ENCODE measurements at regions of chr5 and their contacts with region 1.

Region 1: DNA sequence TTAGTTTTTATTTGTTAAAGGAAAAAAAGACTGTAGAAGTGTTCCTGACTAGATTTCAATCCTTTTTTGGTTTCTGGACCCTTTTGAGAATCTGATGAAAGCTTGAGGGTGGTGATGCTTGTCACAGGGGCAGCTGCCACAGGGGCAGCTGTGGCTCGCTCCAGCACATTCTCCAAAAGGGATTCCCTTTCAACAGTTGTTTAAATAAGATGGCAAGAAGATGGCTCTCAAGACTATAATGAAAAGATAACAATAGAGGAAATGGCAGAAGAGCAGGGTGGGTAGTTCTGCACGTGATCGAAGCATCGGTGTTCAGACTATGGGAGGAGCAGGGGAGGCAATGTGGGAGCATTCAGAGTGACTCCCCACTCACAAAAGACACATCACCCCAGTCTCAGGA is 46.5 kb upstream of the TNFAIP8 start:
- DNase-seq: no peak
- H3K4me3 Mint-ChIP-seq: peak overlapping the region; percentile 82
- H3K27ac Mint-ChIP-seq: peak overlapping the region; percentile 96
- H3K4me1 Mint-ChIP-seq: peaks cover 92% of the 10 kb centered on the region
- H3K27me3 Mint-ChIP-seq: no peaks in the 10 kb centered on the region

Region 2: DNA sequence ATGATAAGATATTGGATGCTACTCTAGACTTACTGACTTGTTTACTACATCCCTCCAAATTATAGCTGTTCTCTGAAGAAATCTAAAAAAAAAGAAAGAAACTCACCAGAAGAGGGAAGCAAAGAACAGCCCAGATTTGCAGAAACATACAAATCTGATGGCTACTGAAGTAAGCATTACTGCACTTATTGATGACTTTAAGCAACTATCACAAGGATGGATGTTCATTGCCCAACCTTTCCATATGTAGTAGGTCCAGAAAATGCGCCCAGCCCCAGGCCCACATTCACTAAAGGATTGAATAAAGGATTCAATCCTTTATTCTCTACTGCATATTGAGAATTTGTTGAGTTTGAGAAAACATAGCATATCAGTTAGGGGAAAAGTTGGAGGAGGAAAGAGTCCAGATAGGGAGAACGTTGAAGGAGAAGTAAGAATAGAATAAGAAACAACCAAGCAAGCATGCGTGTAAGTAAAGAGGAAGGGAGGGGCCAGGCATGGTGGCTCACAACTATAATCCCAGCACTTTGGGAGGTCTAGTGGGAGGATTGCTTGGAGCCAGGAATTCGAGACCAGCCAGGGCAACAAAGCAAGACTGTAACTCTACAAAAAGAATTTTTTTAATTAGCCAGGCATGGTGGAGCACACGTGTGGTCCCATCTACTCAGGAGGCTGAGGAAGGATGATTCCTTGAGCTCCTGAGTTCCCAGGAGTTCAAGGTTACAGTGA is 287.1 kb before region 1 on chr5:
- intact Hi-C with region 1: loop called (anchors 5 kb)
- DNase-seq: no peak
- H3K4me3 Mint-ChIP-seq: no peak overlapping the region
- H3K27ac Mint-ChIP-seq: no peak overlapping the region
- H3K4me1 Mint-ChIP-seq: peaks cover 4% of the 10 kb centered on the region
- H3K27me3 Mint-ChIP-seq: peaks cover 1% of the 10 kb centered on the region

Region 3: DNA sequence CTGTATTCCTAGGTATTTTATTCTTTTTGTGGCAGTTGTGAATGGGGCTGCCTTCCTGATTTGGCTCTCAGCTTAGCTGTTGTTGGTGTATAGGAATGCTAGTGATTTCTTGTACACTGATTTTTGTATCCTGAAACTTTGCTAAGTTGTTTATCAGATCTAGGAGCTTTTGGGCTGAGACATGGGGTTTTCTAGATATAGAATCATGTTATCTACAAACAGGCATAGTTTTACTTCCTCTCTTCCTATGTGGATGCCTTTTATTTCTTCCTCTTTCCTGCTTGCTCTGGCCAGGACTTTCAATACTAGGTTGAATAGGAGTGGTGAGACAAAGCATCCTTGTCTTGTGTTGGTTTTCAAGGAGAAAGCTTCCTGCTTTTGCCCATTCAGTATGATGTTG is 108.5 kb before region 1 on chr5:
- intact Hi-C with region 1: no loop called
- DNase-seq: no peak
- H3K4me3 Mint-ChIP-seq: no peak overlapping the region
- H3K27ac Mint-ChIP-seq: peak overlapping the region; percentile 35
- H3K4me1 Mint-ChIP-seq: peaks cover 6% of the 10 kb centered on the region
- H3K27me3 Mint-ChIP-seq: no peaks in the 10 kb centered on the region

Region 4: DNA sequence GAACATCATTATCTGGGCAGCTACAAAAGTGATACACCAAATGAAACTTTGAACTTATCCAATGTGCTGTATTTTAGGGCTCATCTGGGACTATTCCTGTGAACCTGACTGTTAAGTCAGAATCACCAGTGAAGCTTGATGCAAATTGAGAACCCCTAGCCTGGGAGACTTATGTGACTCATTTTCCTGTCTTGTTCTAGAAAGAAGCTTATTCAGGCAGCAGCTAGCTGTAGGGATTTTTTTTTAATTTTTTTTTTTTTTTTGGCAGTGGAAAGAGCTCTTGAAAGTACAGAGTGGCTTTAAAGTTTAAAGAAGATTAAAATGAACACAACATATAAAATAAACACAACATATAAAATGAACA is 34.6 kb before region 1 on chr5:
- intact Hi-C with region 1: loop called (anchors 1 kb)
- DNase-seq: no peak
- H3K4me3 Mint-ChIP-seq: peak overlapping the region; percentile 99
- H3K27ac Mint-ChIP-seq: peak overlapping the region; percentile 95
- H3K4me1 Mint-ChIP-seq: peaks cover 98% of the 10 kb centered on the region
- H3K27me3 Mint-ChIP-seq: no peaks in the 10 kb centered on the region

Region 5: GRCh38 chr5:119287547-119288073 is 21.7 kb before region 1 on chr5:
- intact Hi-C with region 1: loop called (anchors 1 kb)
- DNase-seq: no peak
- H3K4me3 Mint-ChIP-seq: peak overlapping the region; percentile 72
- H3K27ac Mint-ChIP-seq: peak overlapping the region; percentile 93
- H3K4me1 Mint-ChIP-seq: peaks cover 99% of the 10 kb centered on the region
- H3K27me3 Mint-ChIP-seq: no peaks in the 10 kb centered on the region

Region 6: DNA sequence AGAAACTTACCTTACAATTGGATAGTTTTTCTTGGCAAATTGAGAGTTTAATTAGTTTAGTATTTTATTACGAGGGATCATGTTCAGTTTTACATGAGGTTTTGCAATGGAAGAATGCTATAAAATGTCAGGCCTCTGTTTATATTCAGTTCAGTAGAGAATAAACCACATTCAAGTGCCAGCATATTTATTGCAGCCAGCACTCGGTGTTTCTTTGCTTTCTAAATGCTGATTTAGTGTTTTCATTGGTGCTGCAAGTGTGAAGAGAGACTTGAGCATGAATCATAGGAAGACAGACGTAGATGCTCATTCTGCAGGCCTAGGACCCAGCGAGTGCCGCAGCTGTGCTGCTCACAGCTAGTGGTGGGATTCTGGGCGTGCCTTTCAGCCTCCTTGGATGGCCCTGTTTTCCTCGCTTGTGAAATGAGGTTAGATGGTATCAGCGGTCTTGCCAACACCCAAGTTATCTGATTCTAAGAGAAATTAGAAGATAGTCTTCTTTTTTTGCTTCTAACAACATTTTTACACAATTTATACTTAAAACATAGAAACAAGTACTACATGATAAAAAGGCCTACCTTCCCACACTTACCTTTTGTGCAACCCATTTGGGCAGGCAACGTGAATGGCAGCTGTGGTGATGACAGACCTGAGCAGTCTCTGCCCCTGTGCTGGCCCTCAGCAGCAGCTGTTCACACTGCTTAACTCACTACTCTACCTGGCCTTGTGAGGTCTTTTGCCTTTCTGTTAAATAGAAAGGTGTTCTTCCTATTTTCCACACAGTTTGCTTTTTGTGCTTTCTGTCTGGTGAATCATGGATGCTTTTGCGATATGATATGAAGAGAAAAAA is 19.7 kb after region 1 on chr5:
- intact Hi-C with region 1: loop called (anchors 1 kb)
- DNase-seq: peak; percentile 52
- H3K4me3 Mint-ChIP-seq: peak overlapping the region; percentile 52
- H3K27ac Mint-ChIP-seq: peak overlapping the region; percentile 95
- H3K4me1 Mint-ChIP-seq: peaks cover 91% of the 10 kb centered on the region
- H3K27me3 Mint-ChIP-seq: no peaks in the 10 kb centered on the region

Region 7: DNA sequence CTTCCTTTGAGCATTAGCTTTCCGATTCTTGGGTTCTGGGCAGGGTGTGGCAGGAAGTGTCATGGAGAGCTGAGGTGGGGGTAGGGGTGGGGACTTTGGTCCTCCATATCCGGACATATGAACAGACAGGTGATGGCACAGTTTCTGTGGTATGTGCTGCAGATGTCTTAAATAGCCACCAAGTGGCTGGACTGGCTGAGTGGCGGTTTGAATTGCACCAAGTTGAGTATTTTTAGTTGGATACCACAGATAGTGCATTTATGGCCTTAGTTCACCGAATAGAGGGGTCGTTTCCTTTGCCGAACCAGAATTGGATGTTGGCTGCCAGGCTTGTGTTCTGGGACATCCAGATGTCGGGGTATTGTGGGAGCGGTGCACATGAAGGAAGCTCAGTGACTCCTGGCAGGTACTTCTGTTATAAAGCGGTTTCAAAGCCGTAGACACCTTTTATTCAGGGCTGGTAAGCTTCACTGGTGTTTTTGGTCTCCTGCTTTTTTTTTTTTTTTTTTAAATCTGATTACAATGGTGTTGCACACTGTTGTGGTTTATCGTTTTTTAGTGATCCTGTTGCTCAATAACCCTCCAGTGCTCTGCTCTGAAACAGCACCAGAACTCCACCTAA is 31.4 kb after region 1 on chr5:
- intact Hi-C with region 1: loop called (anchors 1 kb)
- DNase-seq: peak; percentile 63
- H3K4me3 Mint-ChIP-seq: peak overlapping the region; percentile 83
- H3K27ac Mint-ChIP-seq: peak overlapping the region; percentile 100
- H3K4me1 Mint-ChIP-seq: peaks cover 95% of the 10 kb centered on the region
- H3K27me3 Mint-ChIP-seq: no peaks in the 10 kb centered on the region

Measured in activated T-helper 1 cell treated with anti-CD3 and anti-CD28 coated beads, Interleukin-12 subunit alpha, Interleukin-12 subunit beta, Interleukin-2, Interleukin-4 antibody, amounts not matched to agents 30 ng/mL and 10 ng/mL and 1 ng/mL, durations not matched to agents 14 hours and 24 hours and 36 hours (primary cell).